Activated T-helper 2 cell treated with anti-CD3 and anti-CD28 coated beads, Interferon-gamma antibody, Interleukin-2, Interleukin-4, amounts not matched to agents 10 μg/mL and 5 μg/mL and 100 μg/mL, durations not matched to agents 14 hours and 24 hours and 36 hours (primary cell): ENCODE measurements at regions of chr5 and their contacts with region 1.

Region 1: DNA sequence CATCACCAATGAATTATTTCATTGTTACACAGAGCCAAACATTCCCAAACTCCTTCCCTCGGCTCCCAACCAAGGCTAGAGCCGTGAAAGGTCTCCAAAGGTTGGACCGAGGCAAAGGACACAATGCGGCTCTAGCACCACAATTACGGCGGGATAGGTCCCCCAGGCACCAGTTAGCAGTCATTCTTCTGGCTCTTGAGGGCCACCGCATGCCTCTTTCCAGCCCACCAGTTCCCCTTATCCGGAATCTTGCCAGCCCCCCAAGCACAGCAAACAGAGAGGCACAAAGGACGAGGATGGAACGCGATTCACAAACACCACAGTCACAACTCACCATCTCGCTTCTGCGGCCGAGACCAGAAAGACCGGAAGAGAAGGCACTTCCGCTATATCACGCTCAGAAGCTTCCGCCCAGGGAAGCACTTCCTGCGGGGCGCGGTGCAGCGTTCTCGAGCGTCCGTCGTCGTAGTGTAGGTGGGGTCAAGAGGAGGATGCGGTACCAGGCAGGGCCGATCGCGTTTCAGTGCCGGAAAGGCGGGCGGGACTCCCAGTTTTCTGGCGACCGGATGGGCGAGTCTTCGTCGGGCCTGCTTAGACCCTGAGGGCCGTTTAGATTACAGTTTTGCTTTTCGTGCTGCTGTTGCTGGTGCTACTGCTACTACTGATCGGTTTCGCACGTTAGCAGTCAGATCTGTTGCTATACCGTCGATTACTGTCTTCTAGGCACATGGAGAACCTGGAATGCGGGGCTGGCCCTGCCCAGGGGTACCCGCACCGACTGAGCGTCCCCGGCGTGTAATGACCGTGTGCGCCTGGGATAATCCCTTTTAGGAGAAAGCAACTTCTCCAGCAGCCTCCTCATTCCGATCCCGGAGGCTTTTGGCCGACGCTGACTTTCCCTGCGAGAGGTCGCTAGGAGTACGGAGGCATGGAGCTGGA is at the start of gene RPL37:
- DNase-seq: peak; percentile 91
- H3K4me3 Mint-ChIP-seq: peak within 1 kb of the TSS; percentile 99
- H3K27ac Mint-ChIP-seq: peak within 1 kb of the TSS; percentile 98
- H3K4me1 Mint-ChIP-seq: peaks cover 47% of the 10 kb centered on the region
- H3K27me3 Mint-ChIP-seq: no peaks in the 10 kb centered on the region
- total RNA-seq, gene RPL37: 1,583 and 1,632 TPM in 2 replicates

Region 2: DNA sequence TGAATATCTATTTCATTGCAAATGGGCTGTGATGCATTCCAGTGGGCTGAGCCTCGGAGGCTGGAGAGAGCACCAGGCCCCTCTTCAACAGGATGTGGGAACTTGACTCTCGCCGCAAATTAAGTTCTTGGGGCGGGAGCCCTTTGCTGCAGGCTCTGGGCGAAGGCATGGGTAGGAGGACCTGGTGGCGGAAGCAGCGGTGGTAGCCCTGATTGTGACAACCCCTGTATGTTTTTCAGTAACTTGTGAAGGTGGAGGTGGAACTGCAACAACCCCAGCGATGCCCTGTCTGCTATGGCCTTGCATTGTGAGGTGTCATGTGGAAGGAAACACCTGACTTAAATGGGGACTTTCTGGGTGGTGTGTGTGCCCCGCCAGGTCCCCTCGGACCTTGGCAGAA is 1625.2 kb before region 1 on chr5:
- intact Hi-C with region 1: loop called (anchors 10 kb)
- DNase-seq: peak; percentile 82
- H3K4me3 Mint-ChIP-seq: peak overlapping the region; percentile 73
- H3K27ac Mint-ChIP-seq: peak overlapping the region; percentile 90
- H3K4me1 Mint-ChIP-seq: peaks cover 87% of the 10 kb centered on the region
- H3K27me3 Mint-ChIP-seq: no peaks in the 10 kb centered on the region

Region 3: GRCh38 chr5:40404613-40405012 is 430.5 kb before region 1 on chr5:
- intact Hi-C with region 1: loop called (anchors 10 kb)
- DNase-seq: no peak
- H3K4me3 Mint-ChIP-seq: peak overlapping the region; percentile 37
- H3K27ac Mint-ChIP-seq: peak overlapping the region; percentile 84
- H3K4me1 Mint-ChIP-seq: peaks cover 77% of the 10 kb centered on the region
- H3K27me3 Mint-ChIP-seq: no peaks in the 10 kb centered on the region

Region 4: DNA sequence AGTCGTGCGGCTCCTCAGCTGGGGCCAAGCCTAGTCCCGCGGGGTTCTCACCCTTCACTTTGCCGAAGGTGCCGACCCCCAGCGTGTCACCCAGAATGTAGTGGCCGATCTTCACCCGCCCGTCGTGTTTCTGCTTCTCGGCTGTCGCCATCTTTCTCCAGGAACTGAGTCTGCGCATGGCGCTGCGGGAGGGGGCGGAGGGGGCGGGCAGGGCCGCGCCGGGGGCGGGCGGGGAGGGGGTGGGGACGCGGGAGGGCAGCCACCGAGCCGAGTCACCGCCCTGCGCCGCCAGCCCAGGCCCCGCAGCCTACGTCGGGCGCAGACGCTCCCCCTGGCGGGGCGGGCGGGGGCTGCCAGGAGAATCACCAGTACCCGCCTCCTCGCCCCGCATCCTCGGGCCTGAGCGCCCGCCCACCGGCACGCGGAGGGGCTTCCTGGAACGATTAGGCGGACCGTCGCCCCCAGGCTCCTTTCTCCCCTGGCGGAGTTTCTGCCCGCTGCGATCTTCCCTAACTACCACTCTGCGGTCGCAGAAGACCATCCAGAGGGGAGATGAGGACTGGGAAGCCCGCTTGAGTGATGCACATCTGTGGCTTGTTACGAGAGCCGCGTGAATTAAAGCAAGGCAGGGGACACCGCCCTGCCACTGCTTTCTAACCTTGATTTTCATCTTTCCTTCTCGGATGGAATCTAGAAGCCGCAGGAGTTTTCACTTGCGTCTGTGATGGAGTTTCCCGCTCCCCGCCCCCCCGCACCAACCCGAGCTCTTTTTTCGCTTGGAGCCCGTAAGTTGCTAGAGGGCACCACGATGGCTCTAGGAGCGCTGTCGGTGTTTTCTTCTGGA is 36.9 kb before region 1 on chr5 and contains the start of gene PRKAA1:
- intact Hi-C with region 1: loop called (anchors 1 kb)
- DNase-seq: peak; percentile 86
- H3K4me3 Mint-ChIP-seq: peak within 1 kb of the TSS; percentile 88
- H3K27ac Mint-ChIP-seq: peak within 1 kb of the TSS; percentile 90
- H3K4me1 Mint-ChIP-seq: peaks cover 32% of the 10 kb centered on the region
- H3K27me3 Mint-ChIP-seq: peaks cover 9% of the 10 kb centered on the region
- total RNA-seq, gene PRKAA1: 61.2 and 61.7 TPM in 2 replicates

Region 5: GRCh38 chr5:40813698-40814281 is 21.3 kb before region 1 on chr5:
- intact Hi-C with region 1: loop called (anchors 1 kb)
- DNase-seq: no peak
- H3K4me3 Mint-ChIP-seq: no peak overlapping the region
- H3K27ac Mint-ChIP-seq: peak overlapping the region; percentile 29
- H3K4me1 Mint-ChIP-seq: peaks cover 13% of the 10 kb centered on the region
- H3K27me3 Mint-ChIP-seq: no peaks in the 10 kb centered on the region

Region 6: GRCh38 chr5:40823459-40823858 is 11.7 kb before region 1 on chr5:
- intact Hi-C with region 1: loop called (anchors 1 kb)
- DNase-seq: no peak
- H3K4me3 Mint-ChIP-seq: no peak overlapping the region
- H3K27ac Mint-ChIP-seq: no peak overlapping the region
- H3K4me1 Mint-ChIP-seq: peaks cover 16% of the 10 kb centered on the region
- H3K27me3 Mint-ChIP-seq: no peaks in the 10 kb centered on the region